A549 (cell line): ENCODE measurements at regions of chr7 and their contacts with region 1.

Region 1: DNA sequence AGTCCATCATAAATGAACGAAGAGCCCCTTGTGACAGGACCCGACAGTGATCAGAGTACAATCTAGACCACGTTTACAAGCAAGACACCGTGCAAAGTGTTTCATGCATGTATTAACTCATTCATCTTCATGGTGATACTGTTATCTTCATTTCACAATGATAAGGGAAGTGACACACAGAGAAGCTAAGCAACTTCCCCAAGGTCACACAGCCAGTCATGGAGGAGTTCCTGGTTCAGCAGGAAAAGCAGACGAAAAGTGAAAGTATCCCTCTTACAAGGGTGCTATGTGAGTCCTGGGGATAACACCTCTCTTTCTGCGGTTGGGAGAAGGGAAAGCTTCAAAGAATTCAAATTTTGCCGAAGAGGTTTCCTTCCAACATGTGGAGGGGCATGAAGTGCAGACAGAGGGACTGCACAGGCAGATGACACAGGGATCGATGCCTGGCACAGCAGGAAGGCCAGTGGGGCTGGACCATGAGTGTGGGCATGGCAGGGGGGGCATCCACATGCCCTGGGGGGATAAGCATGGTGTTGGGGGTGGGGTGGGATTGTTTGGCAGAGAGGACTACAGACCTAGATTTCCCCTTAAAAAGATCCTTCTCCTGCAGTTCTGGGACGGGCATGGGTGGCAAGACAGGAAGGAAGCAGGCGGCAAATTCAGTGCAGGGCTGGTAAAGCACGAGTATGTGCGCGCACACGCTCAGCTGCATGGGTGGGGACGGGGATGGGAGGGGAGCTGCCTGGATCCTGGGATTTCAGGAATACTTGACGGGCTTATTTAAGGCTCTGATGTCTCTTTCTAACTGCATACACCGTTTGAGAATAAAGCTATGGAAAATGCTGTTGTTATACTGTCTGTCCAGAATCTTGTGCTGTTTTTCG is 33.5 kb upstream of the DDC start:
- DNase-seq: no peak
- ATAC-seq: no peak
- H3K4me3 ChIP-seq: no peak overlapping the region
- H3K27ac ChIP-seq: no peak overlapping the region
- H3K4me1 ChIP-seq: no peaks in the 10 kb centered on the region
- CTCF ChIP-seq: no peak
- EP300 ChIP-seq: no peak
- POLR2A ChIP-seq: no peak
- RAD21 ChIP-seq: no peak

Region 2: GRCh38 chr7:50610521-50611277 is 12.0 kb after region 1 on chr7:
- CTCF ChIA-PET with region 1: interaction called, 10 read pairs
- POLR2A ChIA-PET with region 1: no interaction called
- DNase-seq: no peak
- ATAC-seq: no peak
- H3K4me3 ChIP-seq: no peak overlapping the region
- H3K27ac ChIP-seq: no peak overlapping the region
- H3K4me1 ChIP-seq: no peaks in the 10 kb centered on the region
- CTCF ChIP-seq: no peak
- EP300 ChIP-seq: no peak
- POLR2A ChIP-seq: no peak
- RAD21 ChIP-seq: no peak